Heart left ventricle (tissue), 16 donors: ENCODE measurements at regions of chr6 and their contacts with region 1.

Region 1: DNA sequence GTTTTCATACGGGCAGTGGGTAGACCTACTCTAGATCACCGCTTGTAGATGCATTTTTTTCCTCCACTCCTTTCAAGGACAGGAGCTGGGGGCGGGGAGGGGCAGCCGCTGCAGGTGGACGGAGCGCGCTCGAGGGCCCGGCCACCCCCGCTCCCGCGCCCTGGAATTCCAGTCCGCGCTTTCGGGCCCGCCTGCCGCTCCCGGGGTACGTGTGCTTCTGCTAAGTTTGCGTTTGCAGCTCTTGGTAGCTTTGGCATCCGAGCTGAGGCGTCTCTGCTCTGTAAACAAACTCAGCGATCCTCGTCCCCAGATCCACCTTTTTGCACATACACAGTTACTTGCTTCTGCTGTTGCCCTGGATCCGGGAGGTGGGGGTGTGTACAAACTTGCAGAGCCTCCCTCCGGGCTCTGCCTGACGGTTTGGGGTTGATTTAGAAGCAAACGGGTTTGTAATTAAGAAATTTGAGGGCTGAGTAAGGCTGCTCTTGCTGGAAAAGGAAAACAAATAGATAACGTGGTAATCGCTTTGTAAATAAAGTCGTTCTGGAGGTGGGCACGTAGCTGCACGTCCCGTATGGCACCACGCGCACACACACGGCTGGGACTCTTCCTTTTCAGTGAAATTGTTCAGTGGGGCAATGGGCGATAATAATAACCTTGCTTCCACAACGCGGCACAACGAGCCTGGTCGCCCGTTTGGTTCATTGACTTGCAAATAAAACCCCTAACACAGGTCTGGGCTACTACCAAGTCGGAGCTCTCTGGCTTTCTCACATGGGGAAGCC is 976 bp upstream of the CITED2 start:
- DNase-seq: peak; percentile 90 to 95 (median 91)
- ATAC-seq: peak; percentile 70 to 82 (median 80)
- H3K4me3 ChIP-seq: peak overlapping the region; percentile 78 to 98 (median 92)
- H3K27ac ChIP-seq: peak overlapping the region; percentile 95 to 100 (median 98)
- H3K4me1 ChIP-seq: peaks cover 0 to 30% (median 15%) of the 10 kb centered on the region in 12 donors
- H3K27me3 ChIP-seq: no peaks in the 10 kb centered on the region
- CTCF ChIP-seq: peak in 1 of 12 donors; percentile 14
- POLR2A ChIP-seq: peak in 1 of 2 donors; percentile 64

Region 2: DNA sequence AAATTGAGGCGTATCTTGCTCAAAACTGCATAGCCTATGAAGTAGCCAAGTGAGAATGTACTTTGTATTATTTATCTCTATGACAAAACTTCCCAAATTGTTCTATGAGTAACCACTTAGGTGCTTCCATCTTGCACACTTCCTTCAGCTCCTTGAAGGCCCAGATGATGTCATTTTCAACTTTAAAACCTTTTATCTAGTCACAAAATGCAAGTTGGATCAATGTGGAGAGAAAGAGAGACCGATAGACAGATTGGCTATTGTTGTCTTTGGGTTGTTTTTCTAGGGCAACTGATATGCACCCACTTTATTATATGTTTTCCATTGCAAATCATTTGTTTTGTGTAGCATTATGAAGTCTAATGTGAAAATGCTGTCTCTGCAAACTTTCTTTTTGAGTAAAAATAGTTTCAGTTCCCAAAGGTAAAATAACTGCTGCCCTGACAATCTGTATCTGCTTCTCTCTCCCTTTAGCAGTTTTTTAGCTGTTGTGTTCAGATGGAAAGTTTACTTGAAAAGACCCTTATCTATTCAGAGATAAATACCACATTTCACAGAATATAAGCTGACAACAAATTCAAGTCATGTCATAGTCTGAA is 72.7 kb after region 1 on chr6:
- intact Hi-C with region 1: no loop called
- DNase-seq: no peak
- ATAC-seq: no peak
- H3K4me3 ChIP-seq: no peak overlapping the region
- H3K27ac ChIP-seq: no peak overlapping the region
- H3K4me1 ChIP-seq: peaks cover 0 to 19% (median 0%) of the 10 kb centered on the region in 12 donors
- H3K27me3 ChIP-seq: no peaks in the 10 kb centered on the region
- CTCF ChIP-seq: no peak
- POLR2A ChIP-seq: no peak

Region 3: DNA sequence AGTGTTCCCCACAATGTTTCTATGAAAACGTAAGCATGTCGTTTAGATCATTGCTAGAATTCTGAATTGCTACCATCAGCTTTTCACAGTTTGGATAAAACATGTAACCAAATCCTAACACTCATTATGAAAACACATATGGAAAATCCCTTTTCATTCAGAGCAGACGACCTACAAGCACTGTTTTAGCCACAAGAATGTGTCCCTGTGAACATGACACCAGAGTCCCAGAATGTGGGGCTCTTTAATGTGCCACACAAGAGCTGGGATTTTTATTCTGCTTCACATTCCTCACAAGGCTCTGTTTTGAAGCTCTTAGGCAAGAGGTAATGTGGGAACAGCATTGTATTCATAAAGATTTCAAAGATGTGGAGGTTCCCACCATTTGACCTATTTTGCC is 140.1 kb after region 1 on chr6:
- intact Hi-C with region 1: loop called in 2 of 10 experiments (anchors 1 to 10 kb)
- DNase-seq: no peak
- ATAC-seq: no peak
- H3K4me3 ChIP-seq: no peak overlapping the region
- H3K27ac ChIP-seq: no peak overlapping the region
- H3K4me1 ChIP-seq: peaks cover 0 to 15% (median 7%) of the 10 kb centered on the region in 12 donors
- H3K27me3 ChIP-seq: no peaks in the 10 kb centered on the region
- CTCF ChIP-seq: no peak
- POLR2A ChIP-seq: no peak

Region 4: DNA sequence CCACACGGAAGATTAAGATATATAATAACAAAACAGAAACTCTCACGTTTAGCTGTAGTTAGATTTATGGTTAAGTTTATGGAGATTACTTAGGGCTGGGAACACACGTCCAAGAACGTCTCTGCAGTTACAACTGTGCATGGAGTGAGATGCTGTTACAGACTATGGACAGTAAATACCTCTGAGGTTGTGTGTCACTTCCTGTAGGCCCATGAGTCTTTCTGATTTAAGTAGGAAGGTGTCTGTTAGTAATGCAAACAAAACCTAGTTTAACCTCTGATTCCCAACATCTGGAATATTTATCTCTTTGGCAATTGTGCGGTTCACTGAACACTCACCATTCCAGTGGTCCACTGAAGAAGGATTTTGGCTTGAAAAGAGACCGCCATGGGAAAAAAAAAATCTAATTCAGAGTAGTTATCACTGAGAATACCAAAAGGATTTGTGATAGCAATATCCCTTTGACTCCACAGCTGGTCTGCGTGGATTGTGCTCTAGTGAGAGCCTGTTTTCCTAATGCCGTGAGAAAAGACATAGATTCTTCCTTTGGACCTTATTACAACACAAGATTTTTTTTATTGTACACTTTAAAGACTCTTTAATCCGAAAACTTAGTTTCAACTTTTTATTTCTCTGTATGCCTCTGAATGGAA is 477.2 kb after region 1 on chr6:
- intact Hi-C with region 1: loop called in 1 of 10 experiments (anchors 10 kb)
- DNase-seq: no peak
- ATAC-seq: peak in 1 of 4 donors; percentile 42
- H3K4me3 ChIP-seq: no peak overlapping the region
- H3K27ac ChIP-seq: peak overlapping the region in 5 of 12 donors; percentile 5 to 43 (median 31)
- H3K4me1 ChIP-seq: peaks cover 0 to 13% (median 2%) of the 10 kb centered on the region in 12 donors
- H3K27me3 ChIP-seq: no peaks in the 10 kb centered on the region
- CTCF ChIP-seq: no peak
- POLR2A ChIP-seq: no peak

Region 5: GRCh38 chr6:139973669-139974344 is 598.4 kb after region 1 on chr6:
- intact Hi-C with region 1: loop called in 5 of 10 experiments (anchors 5 to 10 kb)
- DNase-seq: no peak
- ATAC-seq: peak; percentile 86 to 94 (median 89)
- H3K4me3 ChIP-seq: no peak overlapping the region
- H3K27ac ChIP-seq: peak overlapping the region; percentile 13 to 86 (median 72)
- H3K4me1 ChIP-seq: peaks cover 0 to 27% (median 12%) of the 10 kb centered on the region in 12 donors
- H3K27me3 ChIP-seq: no peaks in the 10 kb centered on the region
- CTCF ChIP-seq: no peak
- POLR2A ChIP-seq: no peak

Region 6: GRCh38 chr6:140078561-140079125 is 703.2 kb after region 1 on chr6:
- intact Hi-C with region 1: loop called in 7 of 10 experiments (anchors 2 to 10 kb)
- DNase-seq: peak in 2 of 5 donors; percentile 23 to 43
- ATAC-seq: peak; percentile 15 to 67 (median 56)
- H3K4me3 ChIP-seq: peak overlapping the region in 4 of 12 donors; percentile 5 to 35 (median 21)
- H3K27ac ChIP-seq: peak overlapping the region; percentile 70 to 96 (median 81)
- H3K4me1 ChIP-seq: peaks cover 0 to 32% (median 22%) of the 10 kb centered on the region in 12 donors
- H3K27me3 ChIP-seq: no peaks in the 10 kb centered on the region
- CTCF ChIP-seq: no peak
- POLR2A ChIP-seq: no peak

Region 7: GRCh38 chr6:140915103-140915502 is 1539.7 kb after region 1 on chr6:
- intact Hi-C with region 1: loop called in 6 of 10 experiments (anchors 5 to 10 kb)
- DNase-seq: no peak
- ATAC-seq: peak in 2 of 4 donors; percentile 24 to 46
- H3K4me3 ChIP-seq: no peak overlapping the region
- H3K27ac ChIP-seq: peak overlapping the region in 4 of 12 donors; percentile 11 to 35 (median 26)
- H3K4me1 ChIP-seq: peaks cover 0 to 17% (median 11%) of the 10 kb centered on the region in 12 donors
- H3K27me3 ChIP-seq: no peaks in the 10 kb centered on the region
- CTCF ChIP-seq: peak in 5 of 12 donors; percentile 7 to 31 (median 19)
- POLR2A ChIP-seq: no peak